K562 (cell line): ENCODE measurements at regions of chr16 and their contacts with region 1.

Region 1: DNA sequence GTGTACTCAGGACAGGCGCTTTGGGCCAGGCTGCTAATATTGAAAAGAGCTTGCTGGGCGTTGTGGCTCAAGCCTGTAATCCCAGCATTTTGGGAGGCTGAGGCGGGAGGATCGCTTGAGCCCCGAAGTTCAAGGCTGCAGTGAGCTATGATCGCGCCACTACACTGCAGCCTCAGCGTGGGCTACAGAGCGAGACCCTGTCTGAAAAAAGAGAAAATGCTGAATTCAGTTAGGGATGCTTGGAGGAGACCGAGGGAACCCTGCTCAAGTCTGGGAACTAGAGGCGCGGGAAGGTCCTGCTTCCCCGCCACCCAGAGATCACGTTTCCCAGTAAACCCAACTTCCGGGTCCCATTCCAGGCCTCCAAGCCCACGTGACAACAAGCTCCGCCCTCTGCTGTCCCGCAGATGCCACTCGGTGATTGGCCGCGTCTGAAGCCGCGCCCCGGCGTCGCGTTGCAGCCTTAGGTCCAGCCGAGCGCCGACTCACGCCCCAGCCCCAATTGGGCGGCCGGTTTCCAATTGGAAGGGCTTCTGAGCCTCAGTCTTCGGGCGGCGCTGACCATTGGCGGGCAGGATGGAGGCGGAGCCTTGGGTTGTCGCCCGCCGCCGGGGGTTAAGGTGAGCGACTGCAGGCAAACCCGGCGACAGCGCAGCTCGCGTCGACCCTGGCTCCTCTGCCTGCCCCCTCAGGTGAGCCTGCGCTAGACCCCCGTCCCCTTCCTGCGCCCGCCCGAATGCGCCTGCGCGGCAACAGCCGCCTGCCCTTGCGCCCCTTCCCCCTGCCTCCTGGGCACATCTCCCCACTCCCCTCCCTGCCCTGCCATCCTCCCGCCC is at the start of gene PHKG2:
- DNase-seq: peak; percentile 93 to 100 (median 95)
- ATAC-seq: peak; percentile 100
- H3K4me3 ChIP-seq: peak within 1 kb of the TSS; percentile 68
- H3K27ac ChIP-seq: peak within 1 kb of the TSS; percentile 87
- H3K4me1 ChIP-seq: peaks cover 8 to 17% of the 10 kb centered on the region in 2 experiments; a peak in 4 of 5 replicates
- H3K27me3 ChIP-seq: no peaks in the 10 kb centered on the region
- CTCF ChIP-seq: no peak
- EP300 ChIP-seq: no peak
- POLR2A ChIP-seq: peak; percentile 90
- RAD21 ChIP-seq: no peak
- polyA plus RNA-seq, gene PHKG2: 5.8 to 14.1 TPM

Region 2: DNA sequence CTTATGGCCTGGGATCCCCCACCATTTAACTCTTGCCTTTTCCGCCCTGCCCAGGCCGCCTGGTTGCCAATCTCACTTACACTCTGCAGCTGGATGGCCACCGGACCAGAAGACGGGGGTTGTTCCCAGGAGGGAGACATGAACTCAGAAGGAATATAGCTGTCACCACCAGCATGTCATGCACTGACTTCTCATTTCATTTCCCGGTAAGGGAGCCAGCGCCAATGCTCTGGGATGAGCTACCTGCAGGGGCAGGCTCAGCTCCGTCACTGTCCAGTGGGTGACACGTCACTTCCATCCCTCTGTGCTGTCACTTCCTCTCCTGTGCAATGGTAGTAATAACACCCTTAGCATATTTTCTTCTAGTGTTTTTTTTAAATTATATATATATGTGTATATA is 248.7 kb before region 1 on chr16:
- CTCF ChIA-PET with region 1: no interaction called
- POLR2A ChIA-PET with region 1: no interaction called
- in situ Hi-C with region 1: no loop called
- intact Hi-C with region 1: no loop called
- DNase-seq: peak in 3 of 4 experiments; percentile 35 to 48 (median 46)
- ATAC-seq: peak; percentile 71
- H3K4me3 ChIP-seq: peak overlapping the region; percentile 15; the same call in 1 of the 2 replicates
- H3K27ac ChIP-seq: peak overlapping the region; percentile 41; the same call in 2 of the 3 replicates
- H3K4me1 ChIP-seq: peaks cover 6 to 16% of the 10 kb centered on the region in 2 experiments; a peak in 3 of 5 replicates
- H3K27me3 ChIP-seq: no peaks in the 10 kb centered on the region
- CTCF ChIP-seq: no peak
- EP300 ChIP-seq: no peak
- POLR2A ChIP-seq: no peak
- RAD21 ChIP-seq: no peak

Region 3: DNA sequence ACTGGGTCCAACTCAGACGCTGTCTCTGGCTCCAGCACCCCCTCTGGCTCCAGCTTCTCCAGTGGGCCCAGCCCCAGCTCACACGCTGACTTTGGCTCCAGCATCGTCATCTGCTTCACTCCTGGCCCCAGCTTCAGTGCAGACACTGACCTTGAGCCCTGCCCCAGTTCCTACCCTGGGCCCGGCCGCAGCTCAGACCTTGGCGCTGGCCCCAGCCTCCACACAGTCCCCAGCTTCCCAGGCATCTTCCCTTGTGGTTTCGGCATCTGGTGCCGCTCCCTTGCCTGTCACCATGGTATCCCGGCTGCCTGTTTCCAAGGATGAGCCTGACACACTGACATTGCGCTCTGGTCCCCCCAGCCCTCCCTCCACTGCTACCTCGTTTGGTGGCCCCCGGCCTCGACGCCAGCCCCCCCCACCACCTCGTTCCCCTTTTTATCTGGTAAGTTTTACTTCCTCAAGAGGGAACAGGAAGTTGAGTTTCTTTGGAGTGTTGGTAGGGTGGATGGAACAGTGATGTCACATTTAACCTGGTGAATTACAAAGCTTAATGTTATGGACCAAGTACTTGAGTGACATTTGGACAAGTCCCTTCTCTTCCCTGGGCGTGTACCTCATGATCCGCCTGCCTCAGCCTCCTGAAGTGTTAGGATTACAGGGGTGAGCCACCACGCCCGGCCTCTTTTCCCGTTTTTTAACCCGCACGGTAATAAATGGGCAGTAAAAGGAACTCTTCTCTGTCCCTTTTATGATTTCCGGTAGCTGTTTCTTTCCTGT is 23.2 kb before region 1 on chr16:
- CTCF ChIA-PET with region 1: no interaction called
- POLR2A ChIA-PET with region 1: interaction called, 19 read pairs
- in situ Hi-C with region 1: no loop called
- intact Hi-C with region 1: no loop called
- DNase-seq: no peak
- ATAC-seq: no peak
- H3K4me3 ChIP-seq: no peak overlapping the region
- H3K27ac ChIP-seq: no peak overlapping the region
- H3K4me1 ChIP-seq: peaks cover 0 to 8% of the 10 kb centered on the region in 2 experiments; a peak in 2 of 5 replicates
- H3K27me3 ChIP-seq: no peaks in the 10 kb centered on the region
- CTCF ChIP-seq: no peak
- EP300 ChIP-seq: no peak
- POLR2A ChIP-seq: 0 out of 2 replicates have a peak, but pooled peaks have one; percentile 7
- RAD21 ChIP-seq: no peak

Region 4: GRCh38 chr16:30761928-30762810 is 14.2 kb after region 1 on chr16 and contains the starts of genes CFAP119 and RNF40:
- CTCF ChIA-PET with region 1: no interaction called
- POLR2A ChIA-PET with region 1: interaction called, 28 read pairs
- in situ Hi-C with region 1: no loop called
- intact Hi-C with region 1: loop called (anchors 2 kb)
- DNase-seq: peak; percentile 96 to 100 (median 98)
- ATAC-seq: peak; percentile 94
- H3K4me3 ChIP-seq: peak within 1 kb of the TSS; percentile 88
- H3K27ac ChIP-seq: peak within 1 kb of the TSS; percentile 87
- H3K4me1 ChIP-seq: peaks cover 19 to 51% of the 10 kb centered on the region in 2 experiments; a peak in 4 of 5 replicates
- H3K27me3 ChIP-seq: no peaks in the 10 kb centered on the region
- CTCF ChIP-seq: no peak
- EP300 ChIP-seq: no peak
- POLR2A ChIP-seq: peak; percentile 86
- RAD21 ChIP-seq: no peak
- polyA plus RNA-seq, gene CFAP119: 5.5 to 6.2 TPM
- polyA plus RNA-seq, gene RNF40: 6.2 to 9.1 TPM